ENCODE measurements at regions of chr5 and their contacts with region 1.

Region 1: DNA sequence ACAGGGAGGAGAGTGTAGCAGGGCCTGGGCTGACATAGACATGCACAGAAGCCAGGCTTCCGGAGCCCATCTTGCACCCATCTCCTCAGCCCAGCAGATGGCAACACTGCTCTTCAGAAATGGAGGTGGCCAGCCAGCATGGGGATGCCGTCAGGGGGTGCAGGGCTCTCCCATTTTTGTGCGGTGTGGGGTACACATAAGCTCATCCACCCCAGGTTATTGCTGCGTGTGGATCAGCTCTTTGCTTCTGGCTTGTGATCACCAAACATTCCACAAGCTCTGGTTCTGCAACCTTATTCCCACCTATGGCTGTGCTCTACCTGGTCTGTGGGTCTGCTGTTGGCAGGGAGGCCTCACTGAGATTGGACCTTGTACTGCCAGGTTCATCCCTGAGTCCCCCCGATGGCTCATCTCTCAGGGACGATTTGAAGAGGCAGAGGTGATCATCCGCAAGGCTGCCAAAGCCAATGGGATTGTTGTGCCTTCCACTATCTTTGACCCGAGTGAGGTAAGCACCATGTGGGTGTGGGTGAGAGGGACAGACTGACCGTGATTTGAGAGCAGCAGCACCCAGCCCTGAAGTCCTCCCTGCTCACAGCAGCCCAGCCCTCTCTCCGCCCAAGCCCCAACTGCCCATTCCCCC is 17.3 kb downstream of the SLC22A5 start:
- DNase-seq: peak; percentile 81
- H3K4me3 Mint-ChIP-seq: no peak overlapping the region
- H3K27ac Mint-ChIP-seq: peak overlapping the region; percentile 87
- H3K4me1 Mint-ChIP-seq: peaks cover 59% of the 10 kb centered on the region
- H3K27me3 Mint-ChIP-seq: no peaks in the 10 kb centered on the region
- CTCF ChIP-seq: peak; percentile 90

Region 2: DNA sequence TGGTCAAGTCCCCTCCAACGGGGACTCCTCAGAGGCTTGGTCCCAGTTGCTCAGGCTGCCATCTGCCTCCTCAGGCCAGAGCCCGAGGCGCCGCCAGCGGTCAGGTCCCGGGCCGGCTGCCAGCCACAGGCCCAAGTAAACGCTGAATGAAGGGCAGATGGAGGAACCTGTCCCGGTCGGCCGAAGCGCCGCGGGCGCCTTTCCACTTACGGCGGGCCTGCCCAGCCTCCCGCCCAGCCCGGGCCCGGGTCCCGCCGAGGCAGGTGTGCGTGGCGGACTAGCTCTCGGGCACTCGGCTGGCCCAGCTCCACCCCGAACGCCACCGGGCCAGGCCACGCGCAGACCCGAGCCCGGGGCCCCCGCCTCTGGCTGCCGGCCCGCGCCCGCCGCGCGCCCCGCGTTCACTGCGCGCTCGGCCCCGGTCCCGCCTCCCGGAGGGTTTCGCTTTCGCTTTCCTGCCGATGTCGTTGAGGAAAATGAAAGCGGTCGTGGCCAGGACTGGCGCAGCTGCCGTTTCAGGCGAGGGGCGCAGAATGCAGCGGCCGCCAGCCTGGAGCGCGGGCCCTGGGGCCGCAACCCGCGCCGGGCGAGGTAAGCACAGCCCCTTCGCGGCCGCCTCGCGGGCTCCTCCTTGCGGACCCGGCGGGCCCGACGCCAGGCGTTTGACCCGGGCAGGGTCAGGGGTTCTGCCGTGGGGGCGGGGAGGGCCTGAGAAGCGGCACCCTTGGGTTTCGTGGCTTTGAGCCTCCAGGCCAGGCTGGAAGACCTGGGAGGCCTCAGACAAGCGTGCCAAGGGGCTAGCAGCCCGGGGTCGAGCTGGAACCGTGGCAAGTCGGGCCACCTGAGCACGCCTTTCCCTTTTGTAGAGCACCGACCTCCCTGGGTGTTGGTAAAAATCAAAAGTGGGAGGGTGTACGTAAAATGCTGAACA is 24.0 kb after region 1 on chr5:
- CTCF ChIA-PET with region 1: interaction called, 27 read pairs
- intact Hi-C with region 1: loop called (anchors 1 kb)
- DNase-seq: peak; percentile 91
- H3K4me3 Mint-ChIP-seq: peak overlapping the region; percentile 75
- H3K27ac Mint-ChIP-seq: peak overlapping the region; percentile 78
- H3K4me1 Mint-ChIP-seq: peaks cover 59% of the 10 kb centered on the region
- H3K27me3 Mint-ChIP-seq: no peaks in the 10 kb centered on the region
- CTCF ChIP-seq: peak; percentile 85

Region 3: DNA sequence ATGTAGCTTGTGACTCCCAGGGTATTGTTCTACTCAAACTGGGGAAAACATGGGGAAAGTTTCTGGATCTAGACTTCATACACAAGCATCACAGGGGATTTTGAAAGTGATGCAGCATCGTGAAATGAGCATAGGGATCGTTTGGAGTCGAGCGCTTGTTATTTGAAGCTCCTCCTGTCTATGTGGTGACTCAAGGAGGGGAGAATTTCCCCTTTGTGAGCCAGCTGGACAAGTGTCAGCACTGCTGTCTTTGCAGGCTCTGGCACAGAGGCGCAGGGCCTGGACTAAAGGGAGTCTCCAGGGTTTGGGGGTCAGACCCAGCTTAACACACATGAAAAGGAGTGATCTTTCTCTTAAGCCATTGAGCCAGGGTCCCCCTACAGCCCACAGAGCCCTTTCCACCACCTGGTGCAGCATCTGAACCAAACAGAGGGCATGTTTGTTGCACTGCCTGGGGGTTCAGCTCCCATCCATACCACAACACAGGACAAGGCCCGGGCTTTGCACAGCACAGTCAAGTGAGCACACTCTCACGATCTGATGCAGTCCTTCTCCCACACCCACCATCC is 52.8 kb after region 1 on chr5:
- CTCF ChIA-PET with region 1: no interaction called
- intact Hi-C with region 1: no loop called
- DNase-seq: no peak
- H3K4me3 Mint-ChIP-seq: no peak overlapping the region
- H3K27ac Mint-ChIP-seq: no peak overlapping the region
- H3K4me1 Mint-ChIP-seq: peaks cover 10% of the 10 kb centered on the region
- H3K27me3 Mint-ChIP-seq: no peaks in the 10 kb centered on the region
- CTCF ChIP-seq: no peak

Region 4: DNA sequence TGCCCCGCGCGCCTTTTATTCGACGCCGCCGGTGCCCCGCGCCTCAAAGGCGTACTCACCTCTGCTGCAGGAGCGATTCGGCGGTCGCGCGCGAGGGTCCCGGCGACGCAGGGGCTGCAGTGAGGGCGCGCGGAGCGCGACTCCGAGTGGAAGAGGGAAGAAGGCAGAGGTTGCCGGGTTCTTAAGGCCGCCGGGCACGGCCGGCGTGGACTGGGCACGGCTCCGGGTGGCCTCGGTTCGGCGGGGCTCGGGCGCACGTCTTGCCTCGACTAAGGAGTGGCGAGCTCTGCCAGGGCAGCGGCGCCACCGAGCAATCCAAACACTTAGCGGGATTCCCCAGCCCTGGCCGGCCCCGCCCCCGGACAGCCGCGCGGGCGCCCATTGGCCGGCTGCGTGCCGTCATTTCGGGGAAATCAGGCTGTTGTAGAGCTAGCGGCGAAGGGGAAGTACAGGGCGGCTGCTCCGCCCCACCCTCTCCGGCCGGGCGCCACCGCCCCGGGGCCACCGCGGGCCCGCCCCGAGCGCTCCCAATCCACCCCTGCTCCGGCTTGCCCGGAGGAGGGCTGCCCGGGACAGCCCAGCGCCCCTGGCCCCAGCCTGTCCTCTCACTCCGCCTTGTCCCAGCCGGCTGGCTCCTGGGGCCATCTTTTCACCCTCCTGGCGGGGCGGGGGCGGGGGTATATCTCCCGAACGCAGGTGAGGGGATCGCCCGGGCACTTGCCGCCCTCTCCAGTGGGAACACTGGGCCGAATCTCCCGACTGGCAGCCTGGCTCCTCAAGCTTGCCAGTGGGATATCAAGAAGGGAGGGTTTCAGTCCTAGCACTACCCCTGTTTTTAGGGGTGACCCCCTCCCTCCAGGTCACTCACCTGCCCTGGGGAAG is 104.0 kb after region 1 on chr5 and contains the start of gene IRF1:
- CTCF ChIA-PET with region 1: interaction called, 83 read pairs
- intact Hi-C with region 1: no loop called
- DNase-seq: peak; percentile 99
- H3K4me3 Mint-ChIP-seq: peak within 1 kb of the TSS; percentile 89
- H3K27ac Mint-ChIP-seq: peak within 1 kb of the TSS; percentile 76
- H3K4me1 Mint-ChIP-seq: peaks cover 46% of the 10 kb centered on the region
- H3K27me3 Mint-ChIP-seq: no peaks in the 10 kb centered on the region
- CTCF ChIP-seq: no peak
- total RNA-seq, gene IRF1: 64.0 and 82.4 TPM in 2 replicates

Region 5: GRCh38 chr5:132677191-132677590 is 290.4 kb after region 1 on chr5:
- CTCF ChIA-PET with region 1: interaction called, 4 read pairs
- intact Hi-C with region 1: loop called (anchors 1 kb)
- DNase-seq: peak; percentile 89
- H3K4me3 Mint-ChIP-seq: no peak overlapping the region
- H3K27ac Mint-ChIP-seq: no peak overlapping the region
- H3K4me1 Mint-ChIP-seq: peaks cover 45% of the 10 kb centered on the region
- H3K27me3 Mint-ChIP-seq: no peaks in the 10 kb centered on the region
- CTCF ChIP-seq: peak; percentile 76

Region 6: GRCh38 chr5:132807163-132807838 is 420.5 kb after region 1 on chr5:
- CTCF ChIA-PET with region 1: no interaction called
- intact Hi-C with region 1: loop called (anchors 10 kb)
- DNase-seq: peak; percentile 91
- H3K4me3 Mint-ChIP-seq: peak overlapping the region; percentile 8
- H3K27ac Mint-ChIP-seq: no peak overlapping the region
- H3K4me1 Mint-ChIP-seq: peaks cover 31% of the 10 kb centered on the region
- H3K27me3 Mint-ChIP-seq: peaks cover 10% of the 10 kb centered on the region
- CTCF ChIP-seq: peak; percentile 45

Region 7: DNA sequence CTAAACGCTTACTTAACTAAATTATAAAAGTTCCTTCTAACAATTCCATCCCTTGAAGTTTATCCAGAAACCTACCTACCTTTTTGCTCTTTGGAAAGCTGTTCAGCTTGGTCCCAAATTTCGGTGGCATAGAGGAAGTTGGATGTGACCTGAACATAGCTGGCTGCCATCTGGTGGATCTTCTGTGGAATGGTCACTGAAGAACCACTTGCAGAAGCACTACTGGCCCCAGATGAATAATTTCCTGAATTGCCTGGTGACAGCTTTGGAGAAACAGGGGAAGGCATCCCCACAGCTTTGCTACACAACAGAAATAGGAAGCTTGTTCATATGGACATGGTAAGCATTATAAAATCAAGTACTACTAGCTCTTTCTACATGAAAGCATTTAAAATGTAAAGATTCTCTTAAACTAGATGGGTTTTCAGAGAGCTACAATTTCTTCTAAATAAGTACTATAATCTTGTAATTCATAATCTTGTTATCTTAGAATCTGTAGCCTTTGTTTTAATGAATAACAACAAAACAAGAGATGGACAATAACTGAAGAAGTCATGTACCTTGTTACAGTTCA is 496.6 kb after region 1 on chr5:
- CTCF ChIA-PET with region 1: no interaction called
- intact Hi-C with region 1: loop called (anchors 5 kb)
- DNase-seq: peak; percentile 60
- H3K4me3 Mint-ChIP-seq: no peak overlapping the region
- H3K27ac Mint-ChIP-seq: peak overlapping the region; percentile 44
- H3K4me1 Mint-ChIP-seq: peaks cover 4% of the 10 kb centered on the region
- H3K27me3 Mint-ChIP-seq: no peaks in the 10 kb centered on the region
- CTCF ChIP-seq: peak; percentile 71